ENCODE measurements at regions of chr12 and their contacts with region 1.

Region 1: GRCh38 chr12:125549836-125550235 is 484.6 kb downstream of the AACS start:
- DNase-seq: peak; percentile 2
- H3K4me3 ChIP-seq: no peak overlapping the region
- H3K27ac ChIP-seq: no peak overlapping the region
- H3K4me1 ChIP-seq: no peaks in the 10 kb centered on the region
- CTCF ChIP-seq: peak; percentile 78

Region 2: GRCh38 chr12:125674554-125675338 is 124.9 kb after region 1 on chr12:
- CTCF ChIA-PET with region 1: no interaction called
- POLR2A ChIA-PET with region 1: no interaction called
- intact Hi-C with region 1: loop called (anchors 5 kb)
- DNase-seq: no peak
- H3K4me3 ChIP-seq: no peak overlapping the region
- H3K27ac ChIP-seq: no peak overlapping the region
- H3K4me1 ChIP-seq: no peaks in the 10 kb centered on the region
- CTCF ChIP-seq: no peak

Measured in OCI-LY7 (cell line).